KBM-7 (cell line): ENCODE measurements at regions of chr11 and their contacts with region 1.

Region 1: DNA sequence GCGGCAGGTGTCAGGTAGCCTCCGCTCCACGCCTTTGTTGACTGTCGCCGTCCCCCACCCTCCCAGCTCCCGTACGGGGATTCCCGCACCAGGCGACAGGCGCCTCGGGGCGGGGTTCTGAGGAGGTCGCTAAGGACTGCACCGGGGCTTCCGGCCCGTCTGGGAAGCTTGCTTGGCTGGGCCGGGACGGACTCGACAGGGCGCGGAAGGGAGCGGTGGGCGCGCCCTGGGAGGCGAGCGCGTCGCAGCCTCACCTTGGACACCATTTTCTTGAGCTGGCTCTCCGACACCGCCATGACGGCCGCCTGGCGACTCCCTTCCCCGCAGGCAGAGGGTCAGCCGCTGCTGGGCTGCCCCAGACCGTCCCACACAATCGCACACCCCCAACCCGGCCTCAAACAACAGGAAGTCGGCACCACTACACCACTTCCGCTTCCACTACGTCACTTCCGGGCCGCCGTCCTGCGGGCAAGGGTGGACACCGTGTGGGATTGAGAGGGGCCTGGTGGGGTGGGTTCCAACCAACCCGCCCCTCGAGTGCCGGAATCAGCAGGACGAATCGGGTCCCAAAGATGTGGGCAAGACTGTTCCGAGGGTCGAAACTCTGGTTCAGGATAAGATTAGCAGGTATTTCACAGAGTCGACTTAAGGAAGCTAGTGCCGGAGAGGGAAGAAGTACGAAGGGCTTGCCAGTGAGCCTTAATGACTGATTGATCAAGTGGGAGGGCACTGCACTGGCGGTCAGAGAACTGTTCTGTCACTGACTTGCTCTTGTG is at the start of gene TSG101:
- DNase-seq: peak; percentile 98

Region 2: DNA sequence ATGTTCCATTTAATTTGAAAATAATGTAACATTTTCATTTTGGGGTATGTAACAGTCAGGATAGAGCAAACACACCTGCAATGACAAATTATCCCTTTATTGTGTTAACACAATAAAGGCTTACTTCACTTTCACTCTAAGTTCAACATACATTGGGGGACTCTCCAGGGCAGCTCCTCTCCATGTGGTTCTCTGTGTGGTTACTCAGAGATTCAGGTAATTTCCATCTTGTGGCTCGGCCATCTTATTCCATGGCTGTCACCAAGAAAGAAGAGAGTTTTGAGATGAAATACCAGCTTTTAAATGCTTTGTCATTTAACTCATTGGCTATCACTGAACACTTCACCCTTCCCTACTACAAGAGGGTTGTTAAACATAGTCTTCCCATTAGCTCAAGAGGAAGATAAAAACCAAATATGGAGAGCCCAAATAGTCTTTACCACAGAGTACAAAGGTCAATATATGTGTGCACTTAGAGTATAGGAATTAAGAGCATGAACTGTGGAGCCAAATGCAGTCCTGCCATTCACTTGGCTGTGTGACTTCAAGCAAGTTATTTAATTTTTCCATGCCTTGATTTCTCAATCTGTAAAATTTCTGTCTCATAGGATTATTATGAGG is 470.0 kb before region 1 on chr11:
- in situ Hi-C with region 1: no loop called
- DNase-seq: no peak

Region 3: DNA sequence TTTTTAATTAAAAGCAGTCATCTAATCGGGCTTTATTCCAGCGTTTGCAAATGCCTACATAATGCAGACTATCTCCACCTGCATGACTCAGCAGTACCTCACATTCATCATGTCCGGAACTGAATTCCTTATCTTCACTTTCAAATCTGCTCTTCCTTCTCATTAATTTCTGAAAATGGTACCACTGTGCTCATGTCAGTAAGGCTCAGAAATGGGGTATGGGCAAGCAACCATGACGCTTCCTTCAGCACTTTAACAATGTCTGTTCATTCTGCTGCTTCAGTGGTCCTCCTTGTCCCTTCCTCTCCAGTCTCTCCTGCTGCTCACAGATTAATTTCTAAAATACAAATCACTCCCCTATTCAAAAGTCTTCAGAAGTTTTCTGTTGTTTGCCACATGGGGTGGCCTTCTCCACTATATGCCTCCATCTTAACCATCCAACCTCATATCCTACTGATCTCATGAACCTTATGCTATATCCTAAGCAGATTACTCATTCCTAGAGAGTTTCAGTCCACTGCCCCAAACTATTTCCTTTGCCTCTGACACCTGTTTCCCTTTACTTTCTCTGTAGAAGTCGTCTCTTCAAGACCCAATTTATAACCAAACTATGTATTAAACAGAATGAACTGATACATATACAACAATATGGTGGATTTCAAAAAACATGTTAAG is 197.4 kb before region 1 on chr11:
- in situ Hi-C with region 1: no loop called
- DNase-seq: no peak

Region 4: DNA sequence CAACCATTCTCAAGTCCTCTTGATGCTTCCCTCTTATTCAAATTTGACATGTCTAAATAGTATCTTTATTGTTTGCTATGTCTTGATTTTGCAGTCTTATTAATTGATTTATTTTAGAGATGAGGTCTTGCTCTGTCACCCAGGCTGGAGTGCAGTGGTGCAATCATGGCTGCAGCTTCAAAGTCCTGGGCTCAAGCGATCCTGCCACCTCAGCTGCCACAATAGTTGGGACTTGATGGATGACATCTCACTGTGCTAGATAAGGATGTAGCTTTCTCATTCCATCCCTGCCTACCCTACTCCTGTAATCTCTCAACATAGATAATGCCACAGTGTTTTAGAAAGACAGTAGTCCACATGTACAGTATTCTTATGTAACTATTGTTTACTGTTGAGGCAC is 115.0 kb after region 1 on chr11:
- in situ Hi-C with region 1: no loop called
- DNase-seq: no peak

Region 5: GRCh38 chr11:18731949-18732821 is 205.5 kb after region 1 on chr11:
- in situ Hi-C with region 1: loop called (anchors 25 kb)
- DNase-seq: peak; percentile 81